ENCODE measurements at regions of chr1 and their contacts with region 1.

Region 1: GRCh38 chr1:147494998-147495580 is 46.2 kb upstream of the BCL9 start:
- DNase-seq: no peak
- H3K4me3 ChIP-seq: no peak overlapping the region
- H3K27me3 ChIP-seq: 0 out of 2 replicates have a peak, but pooled peaks cover 4% of the 10 kb centered on the region
- CTCF ChIP-seq: peak; percentile 94

Region 2: GRCh38 chr1:147541672-147542568 is 46.8 kb after region 1 on chr1:
- CTCF ChIA-PET with region 1: interaction called, 12 read pairs
- POLR2A ChIA-PET with region 1: no interaction called
- DNase-seq: no peak
- H3K4me3 ChIP-seq: peak overlapping the region; percentile 60
- H3K27me3 ChIP-seq: no peaks in the 10 kb centered on the region
- CTCF ChIP-seq: no peak

Region 3: GRCh38 chr1:147627435-147628110 is 132.5 kb after region 1 on chr1:
- CTCF ChIA-PET with region 1: interaction called, 26 read pairs
- POLR2A ChIA-PET with region 1: no interaction called
- DNase-seq: no peak
- H3K4me3 ChIP-seq: no peak overlapping the region
- H3K27me3 ChIP-seq: no peaks in the 10 kb centered on the region
- CTCF ChIP-seq: peak; percentile 96

Region 4: DNA sequence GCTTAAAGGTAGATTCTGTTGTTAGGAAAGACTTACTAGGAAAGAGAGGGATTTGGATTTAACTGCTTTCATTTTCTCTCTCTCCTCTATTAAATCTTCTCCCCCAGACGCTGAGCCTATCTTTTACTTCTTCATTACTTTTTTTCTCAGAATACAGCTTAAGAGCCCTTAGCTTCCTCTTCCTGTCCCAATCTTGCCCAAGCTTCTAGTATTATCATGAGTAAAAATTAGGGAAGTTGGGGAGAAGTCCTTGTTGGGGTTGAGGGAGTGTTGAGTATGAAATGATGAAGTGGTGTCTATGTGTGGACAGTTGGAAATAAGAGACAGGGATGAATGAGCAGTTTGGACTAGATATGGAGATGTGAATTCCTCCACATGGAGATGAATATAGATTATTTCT is 140.3 kb after region 1 on chr1:
- CTCF ChIA-PET with region 1: interaction called, 33 read pairs
- POLR2A ChIA-PET with region 1: no interaction called
- DNase-seq: no peak
- H3K4me3 ChIP-seq: no peak overlapping the region
- H3K27me3 ChIP-seq: no peaks in the 10 kb centered on the region
- CTCF ChIP-seq: no peak

Region 5: GRCh38 chr1:147640553-147641165 is 145.6 kb after region 1 on chr1:
- CTCF ChIA-PET with region 1: interaction called, 33 read pairs
- POLR2A ChIA-PET with region 1: no interaction called
- DNase-seq: peak; percentile 13
- H3K4me3 ChIP-seq: no peak overlapping the region
- H3K27me3 ChIP-seq: no peaks in the 10 kb centered on the region
- CTCF ChIP-seq: peak; percentile 97